ENCODE measurements at regions of chr13 and their contacts with region 1.

Region 1: GRCh38 chr13:100088644-100089464 is at the start of gene PCCA:
- DNase-seq: peak; percentile 97 to 98
- H3K4me3 ChIP-seq: peak within 1 kb of the TSS; percentile 97
- H3K4me3 Mint-ChIP-seq: peak within 1 kb of the TSS; percentile 92
- H3K27ac Mint-ChIP-seq: peak within 1 kb of the TSS; percentile 89
- H3K4me1 ChIP-seq: peaks cover 13% of the 10 kb centered on the region
- H3K4me1 Mint-ChIP-seq: peaks cover 32% of the 10 kb centered on the region
- H3K27me3 ChIP-seq: no peaks in the 10 kb centered on the region
- H3K27me3 Mint-ChIP-seq: no peaks in the 10 kb centered on the region
- CTCF ChIP-seq: no peak
- total RNA-seq, gene PCCA: 38.5 and 39.9 TPM in 2 replicates

Region 2: DNA sequence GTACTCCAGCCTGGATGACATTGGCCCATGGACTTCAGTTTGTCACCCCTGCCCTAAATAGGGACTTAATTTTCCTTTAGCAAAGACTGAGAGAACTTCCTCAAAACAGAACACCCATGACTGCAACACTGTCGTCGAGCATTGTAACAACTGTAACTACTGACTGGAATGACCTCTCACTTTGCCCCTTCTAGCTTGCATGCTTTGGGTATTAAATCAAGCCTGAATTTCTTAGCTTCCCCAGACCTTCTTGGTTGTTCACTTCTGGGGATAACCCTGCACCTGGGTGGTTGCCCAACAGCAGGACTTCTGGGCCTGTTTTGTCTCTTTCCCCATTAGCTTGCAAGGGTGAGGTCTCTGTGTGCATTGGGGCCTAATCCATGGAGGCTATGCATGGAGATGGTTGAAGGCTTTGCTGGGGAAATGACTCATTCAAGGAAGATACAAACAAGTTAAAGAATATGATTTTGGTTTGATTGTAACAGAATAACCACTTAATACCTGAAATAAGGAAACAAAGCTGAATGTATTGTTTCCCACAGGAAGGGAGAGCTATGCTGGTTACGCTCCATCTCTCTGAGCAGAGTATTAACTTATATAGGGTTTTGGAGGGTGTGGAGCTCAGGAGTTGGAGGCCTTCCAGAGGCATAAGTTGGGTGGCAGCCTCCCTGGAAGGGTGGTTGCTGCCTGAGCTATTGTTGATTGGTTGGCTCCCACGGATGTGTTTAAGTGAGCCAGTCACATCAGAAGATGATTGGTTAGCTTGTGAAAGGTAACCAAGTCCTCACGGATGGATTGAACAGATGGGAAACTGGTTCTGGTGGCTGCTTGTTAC is 922.9 kb before region 1 on chr13:
- CTCF ChIA-PET with region 1: no interaction called
- POLR2A ChIA-PET with region 1: no interaction called
- intact Hi-C with region 1: no loop called
- DNase-seq: no peak
- H3K4me3 ChIP-seq: no peak overlapping the region
- H3K4me3 Mint-ChIP-seq: no peak overlapping the region
- H3K27ac Mint-ChIP-seq: no peak overlapping the region
- H3K4me1 ChIP-seq: peaks cover 12% of the 10 kb centered on the region
- H3K4me1 Mint-ChIP-seq: peaks cover 14% of the 10 kb centered on the region
- H3K27me3 ChIP-seq: no peaks in the 10 kb centered on the region
- H3K27me3 Mint-ChIP-seq: no peaks in the 10 kb centered on the region
- CTCF ChIP-seq: no peak

Region 3: DNA sequence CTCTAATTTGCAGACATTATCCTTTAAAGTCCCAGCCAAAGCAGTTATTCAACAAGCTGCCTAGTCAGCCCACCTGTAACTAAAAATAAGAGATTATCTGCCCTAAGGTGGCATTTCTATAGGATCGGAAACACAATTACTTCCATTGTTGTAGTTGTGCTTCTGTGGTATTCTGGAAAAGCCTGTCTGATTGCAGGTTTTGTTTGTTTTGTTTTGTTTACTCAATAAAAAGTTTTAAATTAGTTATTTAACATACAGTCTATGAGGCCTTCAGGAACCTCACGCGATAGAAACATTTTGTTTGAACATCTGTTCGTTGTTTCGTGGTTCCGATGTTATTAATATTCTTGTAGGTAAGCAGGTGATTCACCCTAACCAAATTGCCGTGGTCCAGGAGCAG is 218.3 kb before region 1 on chr13:
- CTCF ChIA-PET with region 1: no interaction called
- POLR2A ChIA-PET with region 1: no interaction called
- intact Hi-C with region 1: no loop called
- DNase-seq: no peak
- H3K4me3 ChIP-seq: no peak overlapping the region
- H3K4me3 Mint-ChIP-seq: no peak overlapping the region
- H3K27ac Mint-ChIP-seq: no peak overlapping the region
- H3K4me1 ChIP-seq: 0 out of 2 replicates have a peak, but pooled peaks cover 5% of the 10 kb centered on the region
- H3K4me1 Mint-ChIP-seq: no peaks in the 10 kb centered on the region
- H3K27me3 ChIP-seq: no peaks in the 10 kb centered on the region; the same call in 1 of the 2 replicates
- H3K27me3 Mint-ChIP-seq: peaks cover 19% of the 10 kb centered on the region
- CTCF ChIP-seq: no peak

Region 4: DNA sequence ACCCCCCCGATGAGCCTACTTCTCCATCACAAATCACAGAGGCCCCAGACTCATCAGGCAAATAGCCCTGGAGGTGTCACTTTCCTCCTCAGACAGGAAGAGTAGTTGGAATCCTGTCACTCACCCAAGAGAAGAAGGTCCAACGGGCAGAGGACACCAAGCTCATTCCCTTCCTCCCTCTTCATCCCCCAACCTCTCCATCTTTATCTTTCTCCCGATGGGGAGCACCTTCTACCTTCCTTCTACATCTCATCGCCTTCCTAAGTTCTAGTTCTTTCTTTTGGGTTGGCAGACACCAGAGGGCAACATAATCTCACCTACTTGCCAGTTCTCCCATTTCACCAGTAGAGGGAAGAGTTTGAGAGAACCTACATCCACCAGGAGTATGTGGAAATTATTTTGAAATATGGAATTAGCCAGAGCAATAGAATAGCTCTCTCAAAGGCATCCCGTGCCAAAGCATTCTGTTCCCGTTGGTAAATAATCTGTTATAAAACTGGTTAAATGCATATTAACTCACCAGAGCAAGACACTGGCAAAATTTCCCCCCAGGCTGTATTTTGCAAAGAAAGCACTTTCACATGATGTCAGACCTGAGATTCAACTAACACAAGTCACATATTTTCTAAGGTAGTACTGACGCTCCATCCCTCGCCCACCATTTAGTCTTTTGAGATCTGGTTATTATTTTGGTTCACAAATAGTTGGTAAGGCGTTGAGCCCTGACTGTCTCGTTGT is 172.3 kb before region 1 on chr13:
- CTCF ChIA-PET with region 1: no interaction called
- POLR2A ChIA-PET with region 1: no interaction called
- intact Hi-C with region 1: loop called (anchors 5 kb)
- DNase-seq: peak in 1 of 2 experiments; percentile 65
- H3K4me3 ChIP-seq: no peak overlapping the region
- H3K4me3 Mint-ChIP-seq: no peak overlapping the region
- H3K27ac Mint-ChIP-seq: no peak overlapping the region
- H3K4me1 ChIP-seq: no peaks in the 10 kb centered on the region
- H3K4me1 Mint-ChIP-seq: no peaks in the 10 kb centered on the region
- H3K27me3 ChIP-seq: no peaks in the 10 kb centered on the region
- H3K27me3 Mint-ChIP-seq: peaks cover 12% of the 10 kb centered on the region
- CTCF ChIP-seq: peak; percentile 93 to 99

Region 5: GRCh38 chr13:99980201-99980823 is 108.5 kb before region 1 on chr13:
- CTCF ChIA-PET with region 1: no interaction called
- POLR2A ChIA-PET with region 1: interaction called, 4 read pairs
- intact Hi-C with region 1: loop called (anchors 5 kb)
- DNase-seq: peak; percentile 70 to 80
- H3K4me3 ChIP-seq: peak overlapping the region; percentile 59
- H3K4me3 Mint-ChIP-seq: peak overlapping the region; percentile 61
- H3K27ac Mint-ChIP-seq: no peak overlapping the region
- H3K4me1 ChIP-seq: peaks cover 24% of the 10 kb centered on the region
- H3K4me1 Mint-ChIP-seq: peaks cover 9% of the 10 kb centered on the region
- H3K27me3 ChIP-seq: peaks cover 16% of the 10 kb centered on the region
- H3K27me3 Mint-ChIP-seq: peaks cover 36% of the 10 kb centered on the region
- CTCF ChIP-seq: peak in 1 of 2 experiments; percentile 24

Region 6: DNA sequence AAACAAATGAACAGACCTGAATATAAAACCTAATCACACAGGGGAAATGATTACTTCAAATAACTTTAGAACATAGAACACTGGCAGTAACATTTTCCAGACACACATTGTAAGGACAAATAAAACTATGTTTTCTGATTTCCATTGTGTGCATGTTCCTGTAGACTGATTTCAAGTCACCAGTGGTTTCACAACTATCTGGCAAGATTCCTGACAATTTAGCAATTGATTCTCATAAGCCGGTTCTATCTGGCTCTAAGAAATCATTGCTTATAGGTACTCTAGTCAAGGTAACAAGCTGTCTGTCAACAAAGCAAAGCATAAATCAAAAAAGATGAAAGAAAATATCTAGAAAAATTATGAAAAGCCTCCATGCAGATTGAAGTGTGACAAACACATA is 19.6 kb before region 1 on chr13:
- CTCF ChIA-PET with region 1: no interaction called
- POLR2A ChIA-PET with region 1: interaction called, 10 read pairs
- intact Hi-C with region 1: no loop called
- DNase-seq: no peak
- H3K4me3 ChIP-seq: no peak overlapping the region
- H3K4me3 Mint-ChIP-seq: no peak overlapping the region
- H3K27ac Mint-ChIP-seq: no peak overlapping the region
- H3K4me1 ChIP-seq: no peaks in the 10 kb centered on the region
- H3K4me1 Mint-ChIP-seq: no peaks in the 10 kb centered on the region
- H3K27me3 ChIP-seq: no peaks in the 10 kb centered on the region
- H3K27me3 Mint-ChIP-seq: no peaks in the 10 kb centered on the region
- CTCF ChIP-seq: no peak

Region 7: DNA sequence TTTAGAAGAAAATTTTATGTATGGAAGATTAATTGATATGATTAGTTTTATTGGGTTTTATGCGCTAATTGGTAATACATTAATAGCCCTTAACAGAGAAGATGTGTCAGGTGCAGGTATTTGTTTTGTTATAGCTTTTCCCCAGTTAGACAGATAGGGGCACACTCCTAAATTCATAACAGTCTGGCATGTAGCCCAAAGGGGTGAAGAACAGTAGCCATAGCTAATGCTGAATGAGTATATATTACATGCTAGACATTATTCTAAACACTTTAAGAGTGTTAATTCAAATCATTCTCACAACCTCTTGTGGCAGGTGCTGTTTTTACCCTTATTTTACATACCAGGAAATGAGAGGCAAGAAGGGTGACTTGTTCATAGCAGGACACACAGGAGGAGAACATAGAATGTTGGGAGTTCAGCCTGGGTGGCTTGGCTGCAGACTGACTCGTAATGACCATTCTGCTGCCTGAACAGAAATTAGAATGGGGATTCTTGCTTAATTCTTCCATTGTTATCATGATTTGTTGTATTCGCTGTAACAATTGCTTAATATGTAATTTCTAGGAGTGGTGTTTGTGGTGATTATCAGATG is 20.2 kb after region 1 on chr13:
- CTCF ChIA-PET with region 1: no interaction called
- POLR2A ChIA-PET with region 1: no interaction called
- intact Hi-C with region 1: loop called (anchors 1 kb)
- DNase-seq: no peak
- H3K4me3 ChIP-seq: no peak overlapping the region
- H3K4me3 Mint-ChIP-seq: no peak overlapping the region
- H3K27ac Mint-ChIP-seq: no peak overlapping the region
- H3K4me1 ChIP-seq: peaks cover 11% of the 10 kb centered on the region
- H3K4me1 Mint-ChIP-seq: no peaks in the 10 kb centered on the region
- H3K27me3 ChIP-seq: no peaks in the 10 kb centered on the region
- H3K27me3 Mint-ChIP-seq: no peaks in the 10 kb centered on the region
- CTCF ChIP-seq: no peak

Region 8: DNA sequence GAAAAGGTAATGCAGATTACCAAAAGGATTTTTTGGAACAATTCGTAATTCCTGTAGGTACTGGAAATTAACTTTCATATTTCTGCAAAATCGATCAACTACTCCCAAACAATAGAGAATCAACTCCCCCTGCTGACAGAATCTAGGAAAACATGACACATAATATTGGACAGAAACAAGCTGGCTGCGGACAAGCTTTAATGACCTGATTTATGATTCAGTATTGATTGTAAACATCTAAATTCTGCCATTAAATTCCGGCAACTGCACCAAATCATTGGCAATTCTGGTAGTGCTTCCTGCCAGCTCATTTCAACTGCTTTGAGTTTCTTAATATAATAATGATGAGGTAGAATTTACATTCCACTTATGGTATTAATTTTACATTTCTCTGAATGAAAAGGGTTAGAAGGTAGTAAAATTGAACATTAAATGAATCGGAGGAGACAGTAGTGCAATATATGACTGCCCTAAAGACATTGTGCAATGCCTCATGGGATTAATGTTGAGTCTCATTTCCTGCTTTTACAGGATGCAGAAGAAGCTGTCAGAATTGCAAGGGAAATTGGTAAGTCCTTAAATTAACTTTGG is 146.6 kb after region 1 on chr13:
- CTCF ChIA-PET with region 1: no interaction called
- POLR2A ChIA-PET with region 1: interaction called, 4 read pairs
- intact Hi-C with region 1: loop called (anchors 2 kb)
- DNase-seq: peak in 1 of 2 experiments; percentile 69
- H3K4me3 ChIP-seq: no peak overlapping the region
- H3K4me3 Mint-ChIP-seq: no peak overlapping the region
- H3K27ac Mint-ChIP-seq: no peak overlapping the region
- H3K4me1 ChIP-seq: peaks cover 19% of the 10 kb centered on the region
- H3K4me1 Mint-ChIP-seq: peaks cover 10% of the 10 kb centered on the region
- H3K27me3 ChIP-seq: no peaks in the 10 kb centered on the region
- H3K27me3 Mint-ChIP-seq: no peaks in the 10 kb centered on the region
- CTCF ChIP-seq: peak; percentile 67 to 69

Measured in Caco-2 (cell line).